ENCODE measurements at regions of chr3 and their contacts with region 1.

Region 1: DNA sequence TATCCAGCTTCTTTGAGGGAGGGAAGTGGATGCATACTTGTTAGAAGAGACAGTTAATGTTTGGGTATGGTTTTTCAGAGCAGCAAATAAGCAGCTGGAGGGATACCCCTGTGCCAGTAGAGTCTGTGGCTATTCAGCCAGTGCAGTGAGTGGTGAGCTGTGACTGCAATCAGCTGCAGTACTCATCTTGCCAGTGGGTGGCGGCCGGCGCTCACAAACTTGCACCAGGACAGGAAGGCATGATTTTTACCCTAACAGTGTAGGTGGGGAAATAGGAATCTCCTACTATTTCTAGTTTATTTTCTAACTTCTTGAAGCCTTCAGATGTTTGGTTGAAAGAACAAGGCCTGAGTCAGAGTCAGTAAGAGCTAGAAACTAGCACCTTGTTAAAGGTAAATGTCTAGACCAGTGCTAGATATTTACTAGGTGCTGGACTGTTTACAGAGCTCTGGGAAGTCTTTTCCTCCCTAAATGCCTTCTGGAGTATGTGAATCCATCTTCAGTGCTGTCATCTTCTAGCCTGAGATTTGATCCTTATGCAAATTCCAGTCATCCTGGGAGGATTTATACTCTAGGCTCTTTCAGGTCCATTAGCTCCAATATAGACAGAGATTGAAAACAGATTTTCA is 23.6 kb downstream of the TIMP4 start:
- DNase-seq: peak; percentile 55 to 76
- ATAC-seq: peak; percentile 75 to 89 (median 81)
- H3K4me3 ChIP-seq: no peak overlapping the region
- H3K27ac ChIP-seq: peak overlapping the region in 2 of 10 donors; percentile 18 to 19
- H3K4me1 ChIP-seq: peaks cover 3 to 31% (median 20%) of the 10 kb centered on the region in 9 donors
- H3K27me3 ChIP-seq: peaks cover 0 to 12% (median 0%) of the 10 kb centered on the region in 7 donors
- CTCF ChIP-seq: peak; percentile 80 to 96 (median 92)

Region 2: DNA sequence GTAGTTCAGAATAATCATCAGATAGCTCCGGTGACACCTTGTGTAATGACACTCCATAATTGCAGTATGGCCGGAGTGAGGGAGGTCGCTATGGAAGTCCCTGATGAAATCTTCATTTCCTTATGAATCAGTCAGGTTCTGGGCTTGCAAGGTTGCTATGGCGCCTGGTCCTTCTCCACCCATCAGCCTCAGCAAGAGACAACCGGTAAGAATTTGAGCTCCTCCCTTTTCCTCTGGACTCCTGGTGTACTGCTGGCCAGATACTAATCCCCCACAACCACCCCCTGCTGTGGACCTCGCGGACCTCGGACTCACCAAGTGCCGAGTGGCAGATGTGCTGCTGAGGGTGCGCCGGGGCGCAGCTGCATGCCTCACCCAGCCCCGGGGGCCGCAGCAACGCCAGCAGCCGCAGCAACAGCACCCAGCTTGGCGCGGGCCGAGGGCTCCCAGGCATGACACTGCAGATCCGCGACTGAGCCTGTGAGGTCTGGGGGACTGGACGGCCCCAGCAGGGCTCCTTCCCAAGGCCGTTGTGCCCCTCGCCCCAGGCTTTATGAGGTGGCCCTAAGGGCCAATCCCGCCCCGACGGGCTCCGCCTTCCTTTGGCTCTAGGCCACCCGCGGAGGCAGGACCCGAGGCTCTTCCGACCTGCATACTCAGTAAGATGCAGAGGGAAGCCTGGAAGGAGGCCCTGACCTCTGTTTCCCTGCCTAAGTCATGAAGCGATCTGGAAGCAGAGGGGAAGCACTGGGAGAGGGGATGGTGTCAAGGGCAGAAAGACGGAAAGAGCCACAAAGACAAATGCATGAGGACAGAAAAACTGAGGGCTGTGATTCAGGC is 23.5 kb after region 1 on chr3 and contains the start of gene TIMP4:
- intact Hi-C with region 1: loop called in 1 of 10 experiments (anchors 2 kb)
- DNase-seq: peak; percentile 34 to 69
- ATAC-seq: peak; percentile 61 to 90 (median 82)
- H3K4me3 ChIP-seq: peak within 1 kb of the TSS; percentile 33 to 82 (median 60)
- H3K27ac ChIP-seq: peak within 1 kb of the TSS; percentile 63 to 91 (median 78)
- H3K4me1 ChIP-seq: peaks cover 7 to 43% (median 33%) of the 10 kb centered on the region in 9 donors
- H3K27me3 ChIP-seq: peaks cover 0 to 10% (median 0%) of the 10 kb centered on the region in 7 donors
- CTCF ChIP-seq: no peak
- total RNA-seq, gene TIMP4: 2.7 to 39.4 (median 8.0) TPM

Region 3: GRCh38 chr3:12175844-12176453 is 40.8 kb after region 1 on chr3:
- intact Hi-C with region 1: loop called (anchors 1 to 5 kb)
- DNase-seq: peak; percentile 55 to 70
- ATAC-seq: peak; percentile 67 to 86 (median 82)
- H3K4me3 ChIP-seq: no peak overlapping the region
- H3K27ac ChIP-seq: no peak overlapping the region
- H3K4me1 ChIP-seq: peaks cover 0 to 58% (median 45%) of the 10 kb centered on the region in 9 donors
- H3K27me3 ChIP-seq: no peaks in the 10 kb centered on the region
- CTCF ChIP-seq: peak; percentile 77 to 95 (median 92)

Region 4: DNA sequence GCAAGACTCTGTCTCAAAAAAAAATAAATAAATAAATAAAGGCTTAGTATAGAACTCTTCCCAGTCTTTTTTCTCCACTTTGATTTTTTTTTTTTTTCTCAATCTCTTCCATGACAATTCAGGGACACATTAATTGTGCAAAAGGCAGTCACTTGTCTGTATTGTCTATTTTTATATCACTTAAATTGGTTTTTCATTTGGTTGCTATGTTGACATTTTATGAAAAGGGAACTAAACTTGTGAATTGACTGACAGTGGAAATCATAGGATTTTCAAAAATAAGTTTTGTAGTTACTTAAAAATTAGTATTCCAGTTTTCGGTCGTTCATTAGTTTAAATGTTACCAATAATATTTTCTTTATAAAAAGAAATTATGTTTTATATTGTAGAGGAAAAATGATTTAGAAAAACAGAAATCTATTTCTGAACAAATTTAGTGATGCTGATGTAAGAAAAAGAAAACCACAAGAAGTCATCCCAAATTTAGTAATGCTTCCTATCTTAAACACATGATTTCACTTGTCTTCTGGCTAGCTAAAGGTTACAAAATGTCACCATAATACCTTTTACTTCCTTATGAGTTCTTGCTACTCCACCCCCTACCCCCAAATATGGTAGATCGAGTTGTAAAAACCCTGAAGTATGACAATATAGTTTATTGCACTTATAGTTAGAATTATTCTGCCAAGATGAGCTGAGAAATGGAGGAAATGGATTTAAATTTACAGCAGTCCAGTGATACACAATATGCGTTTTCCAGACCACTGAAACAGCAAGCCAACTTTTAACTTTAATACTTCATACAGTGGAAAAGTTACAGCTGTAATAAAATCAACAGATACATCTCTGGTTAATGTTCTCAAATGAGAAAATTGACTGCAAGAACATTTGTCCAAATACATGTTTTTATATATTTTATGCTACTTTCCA is 190.7 kb after region 1 on chr3:
- intact Hi-C with region 1: no loop called
- DNase-seq: no peak
- ATAC-seq: peak in 1 of 8 donors; percentile 25
- H3K4me3 ChIP-seq: no peak overlapping the region
- H3K27ac ChIP-seq: no peak overlapping the region
- H3K4me1 ChIP-seq: peaks cover 0 to 51% (median 2%) of the 10 kb centered on the region in 9 donors
- H3K27me3 ChIP-seq: no peaks in the 10 kb centered on the region
- CTCF ChIP-seq: no peak

Region 5: GRCh38 chr3:12476238-12476897 is 341.2 kb after region 1 on chr3:
- intact Hi-C with region 1: loop called (anchors 1 to 5 kb)
- DNase-seq: no peak
- ATAC-seq: no peak
- H3K4me3 ChIP-seq: no peak overlapping the region
- H3K27ac ChIP-seq: peak overlapping the region in 3 of 10 donors; percentile 5 to 70 (median 30)
- H3K4me1 ChIP-seq: peaks cover 0 to 24% (median 16%) of the 10 kb centered on the region in 9 donors
- H3K27me3 ChIP-seq: no peaks in the 10 kb centered on the region
- CTCF ChIP-seq: no peak

Region 6: GRCh38 chr3:12719984-12720898 is 585.1 kb after region 1 on chr3:
- intact Hi-C with region 1: loop called in 4 of 10 experiments (anchors 2 to 10 kb)
- DNase-seq: peak; percentile 63 to 89
- ATAC-seq: peak; percentile 87 to 97 (median 96)
- H3K4me3 ChIP-seq: peak overlapping the region in 8 of 10 donors; percentile 24 to 44 (median 40)
- H3K27ac ChIP-seq: peak overlapping the region in 4 of 10 donors; percentile 5 to 53 (median 24)
- H3K4me1 ChIP-seq: peaks cover 0 to 16% (median 4%) of the 10 kb centered on the region in 9 donors
- H3K27me3 ChIP-seq: no peaks in the 10 kb centered on the region
- CTCF ChIP-seq: peak; percentile 79 to 97 (median 93)

Measured in heart right ventricle (tissue), 16 donors.